Left cardiac atrium (tissue), 4 donors: ENCODE measurements at regions of chr12 and their contacts with region 1.

Region 1: GRCh38 chr12:11202811-11203210 is 16.1 kb upstream of the TAS2R42 start:
- DNase-seq: no peak
- ATAC-seq: no peak

Region 2: DNA sequence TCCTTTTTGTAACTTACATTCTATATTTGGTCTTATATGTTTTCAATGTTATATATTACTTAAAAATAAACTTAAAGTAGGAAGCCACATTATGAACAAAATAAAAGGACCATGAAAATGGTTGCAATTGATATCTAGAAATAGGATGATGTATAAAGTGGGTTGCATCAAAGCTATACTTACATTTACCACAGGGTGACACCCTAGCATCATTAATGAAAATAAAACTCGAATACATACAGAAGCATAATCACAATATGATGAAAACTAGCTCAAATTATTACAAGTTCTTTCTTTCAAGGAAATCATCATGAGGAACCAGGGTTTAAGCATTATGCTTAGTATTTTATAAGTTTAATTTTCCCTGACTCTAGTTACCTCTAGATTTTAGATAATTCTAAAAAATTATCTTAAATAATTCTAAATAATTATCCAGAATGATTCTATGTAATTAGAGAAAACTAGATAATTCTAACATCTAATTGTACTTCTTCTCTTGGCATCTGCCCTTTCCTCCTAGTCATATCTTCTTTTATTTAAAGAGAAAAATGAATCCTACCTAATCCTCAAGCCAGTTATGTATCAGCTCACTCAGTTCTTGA is 431.6 kb before region 1 on chr12:
- intact Hi-C with region 1: loop called (anchors 2 to 5 kb)
- DNase-seq: no peak
- ATAC-seq: peak; percentile 57 to 66

Region 3: DNA sequence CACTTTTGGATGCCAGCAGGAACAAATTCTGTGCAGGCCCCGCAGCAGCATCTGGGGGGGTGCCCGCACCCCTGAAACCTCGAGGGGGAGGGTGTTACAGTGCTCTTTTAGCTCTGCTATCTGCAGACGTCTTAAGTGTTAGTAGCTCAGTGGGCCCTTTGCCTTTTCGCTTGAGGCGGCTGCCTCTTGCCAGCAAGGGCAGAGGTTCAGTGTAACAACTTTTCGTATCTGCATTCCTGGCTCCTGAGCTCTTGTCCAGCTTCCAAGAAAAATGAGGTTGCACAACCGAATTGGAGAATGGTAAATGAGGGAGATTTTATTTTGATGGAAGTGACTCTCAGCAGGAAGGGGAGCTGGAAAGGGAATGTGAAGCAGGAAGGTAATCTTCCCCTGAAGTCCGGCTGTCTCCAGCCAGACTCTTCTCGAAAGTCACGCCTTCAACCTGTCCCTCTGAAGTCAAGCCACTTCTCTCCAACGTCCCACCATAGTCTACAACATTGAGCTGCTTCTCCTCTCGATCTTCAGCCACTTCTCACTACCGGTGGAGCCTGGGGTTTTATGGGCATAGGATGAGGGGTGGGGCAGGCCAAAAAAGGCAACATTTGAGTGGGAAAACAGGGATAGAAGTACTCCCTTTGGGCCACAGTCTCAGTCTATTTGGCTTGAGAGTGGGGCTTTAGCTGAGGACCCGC is 233.9 kb before region 1 on chr12:
- intact Hi-C with region 1: loop called in 1 of 2 experiments (anchors 10 kb)
- DNase-seq: peak; percentile 56
- ATAC-seq: peak; percentile 91 to 92

Region 4: DNA sequence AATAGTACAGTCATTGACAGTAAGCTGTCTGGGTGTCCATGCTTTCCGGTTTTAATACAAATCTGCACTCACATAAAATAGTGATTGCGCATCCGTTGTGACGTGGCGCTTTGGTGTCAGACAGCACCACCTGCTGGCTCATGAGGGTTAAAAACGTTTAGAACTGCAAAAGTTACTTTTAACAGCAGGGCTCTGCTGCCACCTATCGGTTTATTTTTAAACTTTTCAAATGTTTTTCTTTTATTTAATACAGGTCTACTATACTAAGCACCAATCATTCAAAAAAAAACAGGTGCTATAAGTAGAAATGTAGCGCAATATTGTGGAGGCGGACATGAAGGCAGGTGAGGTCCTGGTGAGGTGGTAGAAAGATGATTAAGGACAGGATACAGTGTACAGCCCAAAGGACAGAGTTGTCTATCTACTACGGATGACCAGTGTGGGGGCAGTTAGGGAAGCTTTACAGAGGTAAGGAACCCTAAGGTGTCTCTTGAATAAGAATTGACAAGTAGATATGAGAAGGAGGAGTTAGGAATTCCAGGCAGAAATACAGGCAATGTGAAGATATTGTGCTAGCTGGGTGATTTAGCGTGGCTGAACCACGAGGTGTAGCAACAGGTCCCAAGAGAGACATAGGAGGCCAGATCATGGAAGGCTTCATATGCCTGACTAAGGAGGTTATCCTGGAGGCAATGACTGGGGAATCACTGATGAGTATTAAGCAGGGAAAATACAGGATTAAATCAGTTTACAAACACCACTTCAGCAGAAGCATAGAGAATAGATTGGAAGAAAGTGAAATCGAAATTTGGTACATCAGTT is 284.0 kb after region 1 on chr12:
- intact Hi-C with region 1: loop called in 1 of 2 experiments (anchors 2 kb)
- DNase-seq: peak; percentile 83
- ATAC-seq: peak; percentile 81 to 84